Calu3 (cell line): ENCODE measurements at regions of chr13 and their contacts with region 1.

Region 1: GRCh38 chr13:101144808-101145419 is 271.4 kb downstream of the NALCN start:
- DNase-seq: no peak
- H3K4me3 Mint-ChIP-seq: no peak overlapping the region
- H3K27ac Mint-ChIP-seq: no peak overlapping the region
- H3K4me1 Mint-ChIP-seq: peaks cover 9% of the 10 kb centered on the region
- H3K27me3 Mint-ChIP-seq: no peaks in the 10 kb centered on the region
- CTCF ChIP-seq: no peak

Region 2: GRCh38 chr13:101298517-101298916 is 153.6 kb after region 1 on chr13:
- CTCF ChIA-PET with region 1: no interaction called
- intact Hi-C with region 1: loop called (anchors 5 kb)
- DNase-seq: no peak
- H3K4me3 Mint-ChIP-seq: no peak overlapping the region
- H3K27ac Mint-ChIP-seq: no peak overlapping the region
- H3K4me1 Mint-ChIP-seq: no peaks in the 10 kb centered on the region
- H3K27me3 Mint-ChIP-seq: no peaks in the 10 kb centered on the region
- CTCF ChIP-seq: no peak

Region 3: GRCh38 chr13:101474419-101474957 is 329.6 kb after region 1 on chr13:
- CTCF ChIA-PET with region 1: no interaction called
- intact Hi-C with region 1: loop called (anchors 1 kb)
- DNase-seq: peak; percentile 22
- H3K4me3 Mint-ChIP-seq: no peak overlapping the region
- H3K27ac Mint-ChIP-seq: no peak overlapping the region
- H3K4me1 Mint-ChIP-seq: peaks cover 7% of the 10 kb centered on the region
- H3K27me3 Mint-ChIP-seq: no peaks in the 10 kb centered on the region
- CTCF ChIP-seq: no peak

Region 4: GRCh38 chr13:101757446-101758039 is 612.6 kb after region 1 on chr13:
- CTCF ChIA-PET with region 1: no interaction called
- intact Hi-C with region 1: loop called (anchors 2 kb)
- DNase-seq: no peak
- H3K4me3 Mint-ChIP-seq: no peak overlapping the region
- H3K27ac Mint-ChIP-seq: no peak overlapping the region
- H3K4me1 Mint-ChIP-seq: no peaks in the 10 kb centered on the region
- H3K27me3 Mint-ChIP-seq: no peaks in the 10 kb centered on the region
- CTCF ChIP-seq: no peak